Posterior vena cava (tissue), 2 donors: ENCODE measurements at regions of chr4 and their contacts with region 1.

Region 1: DNA sequence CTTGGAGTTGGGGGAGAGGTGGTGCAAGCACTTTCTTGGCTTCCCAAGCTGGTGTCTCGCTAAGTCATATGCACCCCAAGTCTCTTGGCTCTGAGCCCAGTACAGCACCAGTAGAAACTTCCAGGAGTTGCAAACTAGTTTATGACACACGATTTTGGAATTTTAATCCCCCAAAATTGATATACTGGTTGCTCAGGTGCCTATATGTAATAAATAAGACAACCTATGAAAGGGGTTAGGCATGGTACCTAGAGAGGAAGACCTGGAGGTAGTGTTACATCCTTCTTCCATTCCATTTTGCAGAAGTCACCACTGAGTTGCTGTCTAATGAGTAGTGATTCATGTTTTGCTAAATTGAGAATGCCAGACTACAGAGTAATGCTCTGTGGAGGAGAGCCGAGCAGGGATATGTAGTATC is 4.3 kb upstream of the SLC4A4 start:
- DNase-seq: no peak

Region 2: DNA sequence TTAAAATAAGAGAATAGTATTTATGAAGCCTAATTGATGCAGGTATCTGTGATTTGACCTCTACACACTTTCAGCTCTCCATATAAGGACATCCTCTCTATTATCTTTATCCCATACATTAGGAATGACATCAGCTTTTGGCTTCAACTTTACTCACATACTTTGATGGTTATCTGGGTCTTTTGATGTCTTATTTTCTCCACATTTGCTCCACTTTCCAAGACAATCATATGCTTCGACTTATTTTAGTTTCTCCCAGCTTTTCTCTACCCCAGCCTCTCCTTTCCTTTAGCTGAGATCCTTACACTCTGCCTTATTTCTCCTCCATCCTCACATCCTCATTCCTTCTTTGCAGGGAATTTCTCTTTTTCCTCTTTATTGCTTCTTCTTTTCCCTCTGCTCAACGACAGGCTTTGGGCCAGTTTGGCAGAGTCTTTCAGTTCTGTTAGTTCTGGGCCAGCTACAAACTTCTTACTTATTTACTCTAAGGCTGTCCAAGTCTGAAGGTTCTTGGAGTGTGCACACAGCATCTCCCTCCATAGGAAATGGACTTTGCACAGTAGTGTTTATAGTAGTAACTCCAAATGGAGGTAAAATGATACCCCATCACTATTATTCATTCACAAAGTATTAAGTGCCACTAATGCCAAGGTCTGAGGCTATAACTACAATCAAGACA is 54.8 kb after region 1 on chr4:
- intact Hi-C with region 1: loop called in 1 of 2 experiments (anchors 2 kb)
- DNase-seq: no peak

Region 3: GRCh38 chr4:71406459-71406963 is 72.0 kb after region 1 on chr4:
- intact Hi-C with region 1: no loop called
- DNase-seq: no peak